ENCODE measurements at regions of chr6 and their contacts with region 1.

Region 1: GRCh38 chr6:38639498-38640215 is at the start of gene BTBD9:
- DNase-seq: peak; percentile 90
- H3K4me3 ChIP-seq: peak within 1 kb of the TSS; percentile 80 to 92 (median 84)
- H3K27ac ChIP-seq: peak within 1 kb of the TSS; percentile 92 to 94 (median 94)
- H3K4me1 ChIP-seq: peaks cover 0 to 25% (median 13%) of the 10 kb centered on the region in 4 donors
- H3K27me3 ChIP-seq: no peaks in the 10 kb centered on the region
- CTCF ChIP-seq: no peak
- EP300 ChIP-seq: peak in 1 of 4 donors; percentile 42
- POLR2A ChIP-seq: peak; percentile 10 to 48
- total RNA-seq, gene BTBD9: 10.5 to 20.8 (median 12.8) TPM

Region 2: GRCh38 chr6:38702558-38703397 is 63.1 kb after region 1 on chr6 and contains the start of gene GLO1:
- intact Hi-C with region 1: loop called (anchors 5 kb)
- DNase-seq: peak; percentile 99
- H3K4me3 ChIP-seq: peak within 1 kb of the TSS; percentile 68 to 95 (median 85)
- H3K27ac ChIP-seq: peak within 1 kb of the TSS; percentile 92 to 97 (median 95)
- H3K4me1 ChIP-seq: peaks cover 0 to 12% (median 6%) of the 10 kb centered on the region in 4 donors
- H3K27me3 ChIP-seq: no peaks in the 10 kb centered on the region
- CTCF ChIP-seq: no peak
- EP300 ChIP-seq: no peak
- POLR2A ChIP-seq: peak; percentile 78
- total RNA-seq, gene GLO1: 92.8 to 98.5 (median 96.0) TPM

Measured in sigmoid colon (tissue), 7 donors.